Left ventricle myocardium superior (tissue), 1 donor: ENCODE measurements at regions of chr4 and their contacts with region 1.

Region 1: GRCh38 chr4:167021545-167022155 is 212.6 kb downstream of the SPOCK3 start:
- DNase-seq: peak; percentile 79
- ATAC-seq: peak; percentile 57

Region 2: DNA sequence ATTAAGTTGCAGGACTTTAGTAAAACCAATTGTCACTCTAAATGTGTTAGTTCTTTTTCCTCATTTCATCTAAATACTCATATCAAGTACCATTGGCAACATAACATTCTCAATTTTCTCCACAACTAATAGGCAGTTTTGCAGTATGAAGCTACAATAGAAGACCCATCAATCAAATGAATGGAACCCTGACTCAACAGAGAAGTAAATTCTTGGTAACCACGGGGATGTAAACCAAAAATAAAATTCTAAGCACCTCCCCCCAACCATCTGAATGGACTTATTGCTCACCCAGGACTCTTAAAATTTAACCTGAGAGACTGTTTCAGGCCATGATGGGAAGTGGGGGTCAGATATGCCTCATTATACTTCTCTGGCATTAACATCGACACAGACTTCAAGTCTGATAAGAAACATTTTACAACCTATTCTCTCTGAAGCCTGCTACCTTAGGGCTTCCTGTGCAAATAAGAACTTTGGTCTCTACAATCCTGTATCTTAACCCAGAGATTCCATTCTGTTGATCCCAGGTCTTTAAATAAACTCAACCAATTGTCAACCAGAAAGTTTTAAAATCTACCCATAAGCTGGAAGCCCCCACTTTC is 527.7 kb before region 1 on chr4:
- intact Hi-C with region 1: no loop called
- DNase-seq: no peak
- ATAC-seq: no peak

Region 3: GRCh38 chr4:167234316-167234881 is 212.7 kb after region 1 on chr4 and contains the start of gene SPOCK3:
- intact Hi-C with region 1: no loop called
- DNase-seq: peak; percentile 52
- ATAC-seq: peak; percentile 94
- total RNA-seq, gene SPOCK3: 1.1 TPM

Region 4: DNA sequence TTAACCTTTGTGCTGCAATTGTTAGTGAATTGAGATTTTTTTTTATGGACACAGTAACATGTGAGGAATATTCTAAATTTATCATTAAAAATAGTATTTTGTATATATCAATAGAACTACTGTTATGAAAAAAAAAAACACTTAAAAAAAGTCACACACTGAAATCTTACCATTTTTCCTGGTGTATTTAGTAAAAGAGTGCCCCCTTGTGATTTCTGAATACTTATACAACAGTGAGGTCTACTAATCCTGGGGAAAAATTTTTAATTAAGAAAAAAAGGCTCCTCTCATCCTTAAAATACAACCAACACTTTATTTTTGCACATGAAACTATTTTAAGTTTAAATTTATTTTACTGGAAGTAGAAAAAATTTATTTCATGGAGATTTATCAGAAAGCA is 269.0 kb after region 1 on chr4:
- intact Hi-C with region 1: loop called (anchors 2 kb)
- DNase-seq: no peak
- ATAC-seq: no peak

Region 5: DNA sequence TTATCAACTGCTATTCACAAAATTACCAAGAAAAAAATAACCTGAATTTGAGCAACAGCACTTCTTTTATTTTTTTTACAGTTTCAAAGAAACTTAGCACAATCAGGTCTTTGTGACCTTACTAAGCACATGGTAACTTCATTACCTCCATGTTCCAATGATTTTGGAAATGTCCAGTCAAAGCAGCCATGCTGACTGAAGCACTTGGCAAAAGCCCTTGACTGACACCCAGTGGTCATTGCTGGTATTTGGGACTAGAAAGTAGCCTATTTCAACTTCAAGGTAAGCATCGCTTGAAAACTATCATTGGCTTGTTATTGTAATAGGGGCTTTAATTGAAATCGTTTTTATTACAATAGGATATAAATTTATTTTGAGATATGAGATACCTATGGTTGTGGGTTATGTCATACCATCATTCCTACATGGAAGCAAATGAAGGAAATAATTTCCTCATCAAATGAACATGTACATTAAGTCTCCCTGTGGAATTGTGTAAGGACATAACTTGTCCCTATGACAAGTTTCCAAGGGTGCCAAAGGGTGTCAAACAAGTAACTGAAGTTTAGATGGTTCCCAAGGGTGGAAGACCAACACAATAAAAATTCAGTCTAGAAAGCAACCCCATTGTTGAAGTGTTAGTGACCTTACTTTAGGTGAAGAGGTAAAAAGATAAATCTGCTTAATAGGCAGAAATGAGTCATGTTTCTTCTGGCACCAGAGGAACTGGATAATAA is 1055.5 kb after region 1 on chr4:
- intact Hi-C with region 1: loop called (anchors 10 kb)
- DNase-seq: peak; percentile 20
- ATAC-seq: no peak